ENCODE measurements at regions of chr16 and their contacts with region 1.

Region 1: GRCh38 chr16:13441675-13442074 is 478.3 kb upstream of the ERCC4 start:
- DNase-seq: no peak
- ATAC-seq: no peak
- H3K4me3 ChIP-seq: no peak overlapping the region
- H3K4me3 Mint-ChIP-seq: no peak overlapping the region
- H3K27ac ChIP-seq: no peak overlapping the region
- H3K27ac Mint-ChIP-seq: no peak overlapping the region
- H3K4me1 ChIP-seq: no peaks in the 10 kb centered on the region
- H3K4me1 Mint-ChIP-seq: no peaks in the 10 kb centered on the region
- H3K27me3 ChIP-seq: no peaks in the 10 kb centered on the region
- H3K27me3 Mint-ChIP-seq: no peaks in the 10 kb centered on the region
- CTCF ChIP-seq: no peak

Region 2: DNA sequence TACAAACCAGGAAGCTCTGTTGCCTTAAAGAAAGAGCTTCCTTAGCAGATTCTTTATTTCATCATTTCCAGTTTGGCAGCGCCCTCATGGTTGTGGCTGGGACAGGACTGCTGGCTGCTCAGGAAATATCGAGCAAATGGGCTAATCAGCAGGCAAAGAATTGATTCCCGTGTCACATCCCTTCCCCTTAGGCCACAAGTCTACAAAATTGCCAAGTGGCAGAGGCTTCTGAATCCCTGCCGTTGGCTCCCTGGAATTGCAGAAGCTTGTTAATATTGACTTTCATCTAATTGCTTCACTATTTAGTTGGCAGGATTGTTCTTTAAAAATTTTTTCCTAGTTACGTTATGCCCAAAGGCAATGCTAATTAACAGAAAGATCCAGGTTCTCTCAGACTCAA is 21.9 kb after region 1 on chr16:
- CTCF ChIA-PET with region 1: no interaction called
- POLR2A ChIA-PET with region 1: interaction called, 12 read pairs
- intact Hi-C with region 1: no loop called
- DNase-seq: no peak
- ATAC-seq: no peak
- H3K4me3 ChIP-seq: no peak overlapping the region
- H3K4me3 Mint-ChIP-seq: no peak overlapping the region
- H3K27ac ChIP-seq: no peak overlapping the region
- H3K27ac Mint-ChIP-seq: no peak overlapping the region
- H3K4me1 ChIP-seq: no peaks in the 10 kb centered on the region
- H3K4me1 Mint-ChIP-seq: no peaks in the 10 kb centered on the region
- H3K27me3 ChIP-seq: no peaks in the 10 kb centered on the region
- H3K27me3 Mint-ChIP-seq: no peaks in the 10 kb centered on the region
- CTCF ChIP-seq: no peak

Region 3: DNA sequence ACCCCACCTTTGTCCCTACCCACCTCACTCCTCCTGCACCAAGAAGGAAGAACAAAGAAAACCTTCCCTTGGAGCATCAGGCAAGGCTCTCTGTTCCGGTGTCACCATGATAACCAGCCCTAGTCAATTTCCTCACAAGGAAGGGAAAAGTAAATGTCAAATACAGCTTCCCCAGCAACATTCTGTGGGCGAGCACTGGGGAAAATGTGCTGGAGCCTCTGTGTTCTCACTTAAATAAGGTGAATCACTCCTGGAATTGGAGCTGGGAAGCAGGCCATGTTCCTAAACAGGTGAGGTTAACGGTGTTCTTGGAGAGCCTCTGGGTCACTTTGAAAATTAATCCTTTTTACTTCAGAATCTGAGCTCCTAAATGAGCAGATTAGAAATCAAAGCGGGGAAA is 50.4 kb after region 1 on chr16:
- CTCF ChIA-PET with region 1: no interaction called
- POLR2A ChIA-PET with region 1: no interaction called
- intact Hi-C with region 1: no loop called
- DNase-seq: no peak
- ATAC-seq: no peak
- H3K4me3 ChIP-seq: no peak overlapping the region
- H3K4me3 Mint-ChIP-seq: no peak overlapping the region
- H3K27ac ChIP-seq: no peak overlapping the region
- H3K27ac Mint-ChIP-seq: no peak overlapping the region
- H3K4me1 ChIP-seq: no peaks in the 10 kb centered on the region
- H3K4me1 Mint-ChIP-seq: no peaks in the 10 kb centered on the region
- H3K27me3 ChIP-seq: peaks cover 0 to 3% (median 2%) of the 10 kb centered on the region in 4 experiments
- H3K27me3 Mint-ChIP-seq: peaks cover 11% of the 10 kb centered on the region
- CTCF ChIP-seq: no peak

Measured in B cell (primary cell).